ENCODE measurements at regions of chr1 and their contacts with region 1.

Region 1: DNA sequence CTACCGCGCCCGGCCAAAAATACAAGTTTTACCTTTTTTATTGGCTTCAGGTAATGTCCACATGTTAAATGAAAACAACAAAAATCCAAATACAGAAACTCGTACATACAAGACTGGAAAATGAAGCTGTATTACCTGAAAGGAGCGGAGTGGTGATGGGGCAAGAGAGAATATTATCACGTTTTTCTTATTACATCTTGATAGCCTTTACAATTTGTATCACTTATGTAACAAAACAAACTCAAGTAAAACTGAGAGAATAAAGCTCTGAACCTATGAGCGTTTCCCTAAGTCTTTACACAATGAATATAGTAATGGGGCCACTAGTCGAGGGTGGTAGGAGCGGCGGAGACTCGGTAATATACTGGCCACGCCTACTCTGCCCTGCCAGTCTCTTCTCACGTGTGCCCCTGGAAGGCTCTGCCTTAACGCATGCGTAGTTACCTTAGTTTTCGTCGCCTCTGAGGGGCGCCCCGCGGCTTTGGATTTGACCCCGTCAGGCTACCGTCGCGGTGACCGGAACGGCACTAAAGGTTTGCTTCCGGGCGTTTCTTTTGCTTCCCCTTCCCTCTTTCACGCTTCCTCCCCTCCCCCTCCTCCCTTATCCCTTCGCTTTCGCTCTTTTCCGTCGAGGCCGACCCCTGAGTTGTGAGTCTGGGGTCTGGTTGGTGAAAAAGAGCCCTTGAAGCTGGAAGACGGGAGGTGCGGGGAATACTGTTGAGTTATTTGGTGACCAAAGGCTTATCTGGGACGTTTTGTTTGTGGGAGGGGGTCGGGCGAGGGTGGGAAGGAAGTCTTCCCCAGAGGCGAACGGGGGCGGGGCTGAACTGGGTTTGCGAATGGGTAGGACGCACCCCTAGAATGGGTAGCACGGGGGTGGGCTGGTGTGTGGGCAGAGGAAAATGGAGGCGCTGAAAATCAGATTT is at the start of gene SETDB1:
- DNase-seq: peak; percentile 90
- H3K4me3 Mint-ChIP-seq: peak within 1 kb of the TSS; percentile 97
- H3K27ac Mint-ChIP-seq: peak within 1 kb of the TSS; percentile 95
- H3K4me1 Mint-ChIP-seq: peaks cover 23% of the 10 kb centered on the region
- H3K27me3 Mint-ChIP-seq: no peaks in the 10 kb centered on the region
- total RNA-seq, gene SETDB1: 60.6 and 63.7 TPM in 2 replicates

Region 2: GRCh38 chr1:150235852-150236613 is 690.0 kb before region 1 on chr1 and contains the start of gene ANP32E:
- intact Hi-C with region 1: loop called (anchors 1 kb)
- DNase-seq: peak; percentile 93
- H3K4me3 Mint-ChIP-seq: no peak within 1 kb of the TSS
- H3K27ac Mint-ChIP-seq: peak within 1 kb of the TSS; percentile 99
- H3K4me1 Mint-ChIP-seq: peaks cover 19% of the 10 kb centered on the region
- H3K27me3 Mint-ChIP-seq: peaks cover 3% of the 10 kb centered on the region
- total RNA-seq, gene ANP32E: 196 and 217 TPM in 2 replicates

Region 3: GRCh38 chr1:150561974-150562445 is 364.1 kb before region 1 on chr1:
- intact Hi-C with region 1: loop called (anchors 2 kb)
- DNase-seq: peak; percentile 91
- H3K4me3 Mint-ChIP-seq: peak overlapping the region; percentile 98
- H3K27ac Mint-ChIP-seq: peak overlapping the region; percentile 98
- H3K4me1 Mint-ChIP-seq: peaks cover 64% of the 10 kb centered on the region
- H3K27me3 Mint-ChIP-seq: no peaks in the 10 kb centered on the region

Region 4: DNA sequence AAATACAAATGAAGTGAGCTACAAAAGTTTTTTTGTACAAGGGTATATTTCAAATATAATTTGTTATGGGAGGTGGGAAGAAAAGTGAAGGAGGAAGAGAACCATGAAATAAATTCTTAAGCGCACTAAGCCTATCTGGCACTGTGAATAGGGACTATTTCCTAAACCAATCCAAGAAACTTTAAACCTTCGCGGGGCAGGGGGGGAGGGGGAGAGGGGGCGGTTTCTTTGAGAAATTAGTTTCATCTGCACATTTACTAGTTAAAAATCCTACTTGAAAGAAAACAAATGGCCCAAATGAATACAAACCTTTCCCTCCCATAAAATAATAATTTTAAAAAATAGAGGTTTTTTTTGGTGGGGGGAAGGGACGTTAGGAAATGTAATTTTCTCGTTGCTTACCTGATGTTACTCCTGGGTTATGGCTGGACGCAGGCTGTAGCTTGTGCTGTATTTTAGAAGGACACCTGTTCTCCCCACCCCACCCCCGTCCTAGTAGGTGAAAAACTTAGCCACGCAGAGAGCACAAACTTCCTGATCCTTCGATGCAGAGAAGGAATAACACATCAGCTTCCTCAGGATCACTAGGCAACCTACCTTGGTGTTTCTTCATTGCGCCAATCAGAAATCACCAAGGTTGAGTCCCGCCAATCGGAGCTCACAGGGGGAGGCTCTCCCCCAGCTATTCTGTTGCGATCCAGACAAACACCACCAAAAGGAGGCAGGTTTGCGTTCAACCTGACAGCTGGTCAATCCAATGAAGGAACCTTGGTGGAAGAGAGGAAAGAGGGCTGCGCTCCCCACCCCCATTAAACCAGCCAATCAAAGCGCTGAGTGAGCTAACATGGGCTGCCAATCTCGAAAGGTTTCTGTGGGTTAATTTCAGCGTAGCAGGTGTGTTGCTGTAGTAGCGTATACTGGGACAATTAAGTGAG is 229.2 kb before region 1 on chr1 and contains the start of gene GOLPH3L:
- intact Hi-C with region 1: loop called (anchors 2 kb)
- DNase-seq: peak; percentile 89
- H3K4me3 Mint-ChIP-seq: peak within 1 kb of the TSS; percentile 91
- H3K27ac Mint-ChIP-seq: peak within 1 kb of the TSS; percentile 85
- H3K4me1 Mint-ChIP-seq: peaks cover 33% of the 10 kb centered on the region
- H3K27me3 Mint-ChIP-seq: peaks cover 12% of the 10 kb centered on the region
- total RNA-seq, gene GOLPH3L: 19.1 and 20.5 TPM in 2 replicates

Region 5: GRCh38 chr1:150841626-150842025 is 84.5 kb before region 1 on chr1:
- intact Hi-C with region 1: loop called (anchors 1 kb)
- DNase-seq: peak; percentile 18
- H3K4me3 Mint-ChIP-seq: peak overlapping the region; percentile 32
- H3K27ac Mint-ChIP-seq: peak overlapping the region; percentile 49
- H3K4me1 Mint-ChIP-seq: peaks cover 31% of the 10 kb centered on the region
- H3K27me3 Mint-ChIP-seq: no peaks in the 10 kb centered on the region

Region 6: DNA sequence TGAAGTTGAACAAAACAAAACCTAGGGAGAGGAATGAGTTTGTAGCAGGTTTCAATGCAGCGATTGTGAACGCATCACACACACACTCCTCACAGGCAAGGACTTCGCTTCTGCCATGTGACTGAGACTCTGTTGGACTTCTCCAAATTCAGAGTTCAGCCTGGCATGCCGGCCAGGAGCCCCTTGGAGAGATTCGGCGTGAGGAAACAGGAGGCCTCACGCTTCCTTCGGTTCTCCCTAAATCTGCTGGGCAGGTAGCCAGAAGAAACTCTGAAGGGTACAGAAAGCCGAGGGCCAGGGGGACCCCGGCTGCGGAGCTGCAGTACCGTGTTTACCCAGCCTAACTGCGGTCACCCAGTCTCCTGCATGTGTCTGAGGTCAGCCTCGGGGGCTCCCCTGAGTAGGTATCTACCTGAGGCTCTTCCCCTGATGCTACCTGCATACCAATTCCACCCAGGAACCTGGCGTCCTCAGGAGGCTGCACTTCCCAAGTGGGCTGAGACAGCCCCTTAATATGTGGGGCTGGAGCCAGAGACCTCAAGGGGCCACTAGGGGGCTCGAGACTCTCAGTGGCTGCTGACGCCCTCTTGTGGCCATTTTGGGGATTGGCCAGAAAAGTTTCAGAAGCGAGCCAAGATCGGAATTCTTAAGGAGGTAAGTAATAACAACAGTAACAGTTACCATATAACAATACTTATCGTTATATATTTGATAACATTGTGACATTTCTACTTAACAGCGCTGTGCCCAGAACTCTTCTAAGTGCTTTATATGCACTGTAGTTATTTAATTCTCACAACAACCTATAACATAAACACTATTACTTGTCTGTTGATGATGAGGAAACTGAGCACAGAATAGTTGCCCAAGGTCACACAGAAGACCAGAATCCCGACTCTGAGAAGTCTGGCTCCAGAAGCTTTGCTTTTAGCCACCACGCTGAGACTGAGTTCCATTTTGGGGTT is 53.3 kb after region 1 on chr1:
- intact Hi-C with region 1: loop called (anchors 2 kb)
- DNase-seq: peak; percentile 80
- H3K4me3 Mint-ChIP-seq: no peak overlapping the region
- H3K27ac Mint-ChIP-seq: no peak overlapping the region
- H3K4me1 Mint-ChIP-seq: peaks cover 32% of the 10 kb centered on the region
- H3K27me3 Mint-ChIP-seq: no peaks in the 10 kb centered on the region

Region 7: GRCh38 chr1:151070474-151071276 is 144.6 kb after region 1 on chr1 and contains the start of gene GABPB2:
- intact Hi-C with region 1: loop called (anchors 2 kb)
- DNase-seq: peak; percentile 81
- H3K4me3 Mint-ChIP-seq: peak within 1 kb of the TSS; percentile 98
- H3K27ac Mint-ChIP-seq: peak within 1 kb of the TSS; percentile 100
- H3K4me1 Mint-ChIP-seq: peaks cover 17% of the 10 kb centered on the region
- H3K27me3 Mint-ChIP-seq: no peaks in the 10 kb centered on the region
- total RNA-seq, gene GABPB2: 19.4 and 21.5 TPM in 2 replicates